Calu3 (cell line): ENCODE measurements at regions of chr1 and their contacts with region 1.

Region 1: DNA sequence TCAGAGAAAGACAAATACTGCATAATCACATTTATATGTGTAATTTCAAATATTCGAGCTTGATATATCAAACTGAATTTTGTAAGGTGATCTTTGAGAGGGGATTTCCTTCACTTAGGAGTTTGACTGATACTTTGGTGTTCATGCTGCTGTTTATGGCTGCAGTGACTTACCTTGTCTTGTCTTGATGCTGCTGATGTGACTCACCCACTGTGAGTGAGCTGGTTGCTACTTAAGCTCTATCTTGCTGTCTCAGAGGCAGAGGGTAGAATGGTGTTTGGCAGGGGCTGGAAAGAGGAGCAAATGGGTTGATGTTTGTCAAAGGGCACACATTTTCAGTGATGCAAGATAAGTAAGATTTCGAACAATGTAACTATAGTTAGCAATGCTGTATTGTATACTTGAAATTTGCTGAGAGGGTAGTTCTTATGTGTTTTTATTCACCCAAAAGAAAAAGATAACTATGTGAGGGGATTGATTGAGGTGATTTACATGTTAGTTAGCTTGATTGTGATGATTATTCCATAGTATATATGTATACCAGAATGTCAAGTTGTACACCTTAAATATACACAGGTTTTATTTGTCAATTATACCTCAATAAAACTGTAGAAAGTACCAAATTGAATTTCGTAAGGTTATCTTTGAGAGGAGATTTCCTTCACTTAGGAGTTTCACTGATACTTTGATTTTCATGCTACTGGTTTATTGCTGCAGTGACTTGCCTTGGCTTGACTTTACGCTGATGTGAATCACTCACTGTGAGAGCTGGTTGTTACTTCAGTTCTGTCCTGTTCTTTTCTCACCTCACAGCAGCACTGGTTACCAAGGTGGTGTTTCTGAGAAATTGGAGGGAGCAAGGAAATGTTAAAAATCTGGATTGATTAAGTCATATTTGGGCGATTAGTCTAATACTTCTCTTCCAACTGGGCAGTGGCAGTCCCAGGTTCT is 94.5 kb upstream of the SLC5A9 start:
- DNase-seq: no peak
- H3K4me3 Mint-ChIP-seq: no peak overlapping the region
- H3K27ac Mint-ChIP-seq: no peak overlapping the region
- H3K4me1 Mint-ChIP-seq: no peaks in the 10 kb centered on the region
- H3K27me3 Mint-ChIP-seq: peaks cover 33% of the 10 kb centered on the region
- CTCF ChIP-seq: no peak

Region 2: GRCh38 chr1:48164571-48164970 is 36.6 kb after region 1 on chr1:
- CTCF ChIA-PET with region 1: no interaction called
- intact Hi-C with region 1: loop called (anchors 5 kb)
- DNase-seq: no peak
- H3K4me3 Mint-ChIP-seq: no peak overlapping the region
- H3K27ac Mint-ChIP-seq: no peak overlapping the region
- H3K4me1 Mint-ChIP-seq: no peaks in the 10 kb centered on the region
- H3K27me3 Mint-ChIP-seq: peaks cover 35% of the 10 kb centered on the region
- CTCF ChIP-seq: no peak

Region 3: GRCh38 chr1:48187969-48188563 is 60.1 kb after region 1 on chr1:
- CTCF ChIA-PET with region 1: no interaction called
- intact Hi-C with region 1: loop called (anchors 5 kb)
- DNase-seq: no peak
- H3K4me3 Mint-ChIP-seq: no peak overlapping the region
- H3K27ac Mint-ChIP-seq: no peak overlapping the region
- H3K4me1 Mint-ChIP-seq: no peaks in the 10 kb centered on the region
- H3K27me3 Mint-ChIP-seq: no peaks in the 10 kb centered on the region
- CTCF ChIP-seq: no peak